GM12878 (cell line): ENCODE measurements at regions of chr3 and their contacts with region 1.

Region 1: GRCh38 chr3:117355566-117355965 is 646.0 kb downstream of the TUSC7 start:
- DNase-seq: no peak
- ATAC-seq: peak; percentile 90
- H3K4me3 ChIP-seq: no peak overlapping the region
- H3K27ac ChIP-seq: no peak overlapping the region
- H3K4me1 ChIP-seq: no peaks in the 10 kb centered on the region
- H3K27me3 ChIP-seq: no peaks in the 10 kb centered on the region; a peak in 1 of 4 replicates
- CTCF ChIP-seq: peak; percentile 27 to 60 (median 51); a peak in 3 of 6 replicates
- EP300 ChIP-seq: no peak
- POLR2A ChIP-seq: no peak
- RAD21 ChIP-seq: peak; percentile 49

Region 2: GRCh38 chr3:117059067-117059955 is 296.3 kb before region 1 on chr3:
- CTCF ChIA-PET with region 1: no interaction called
- POLR2A ChIA-PET with region 1: no interaction called
- RAD21 ChIA-PET with region 1: no interaction called
- SMC1A ChIA-PET with region 1: no interaction called
- in situ Hi-C with region 1: no loop called
- intact Hi-C with region 1: loop called (anchors 1 kb)
- DNase-seq: no peak
- ATAC-seq: no peak; the same call in 2 of the 3 replicates
- H3K4me3 ChIP-seq: no peak overlapping the region
- H3K27ac ChIP-seq: no peak overlapping the region
- H3K4me1 ChIP-seq: no peaks in the 10 kb centered on the region
- H3K27me3 ChIP-seq: no peaks in the 10 kb centered on the region
- CTCF ChIP-seq: peak; percentile 25 to 32 (median 26); a peak in 2 of 6 replicates
- EP300 ChIP-seq: no peak
- POLR2A ChIP-seq: no peak
- RAD21 ChIP-seq: peak; percentile 27; the same call in 1 of the 2 replicates